ENCODE measurements at regions of chr3 and their contacts with region 1.

Region 1: GRCh38 chr3:124878561-124879336 is 8.4 kb downstream of the ITGB5 start:
- DNase-seq: peak in 1 of 2 donors; percentile 89
- H3K4me3 ChIP-seq: peak overlapping the region in 1 of 2 donors; percentile 31
- H3K27ac ChIP-seq: peak overlapping the region; percentile 91 to 97
- H3K4me1 ChIP-seq: peaks cover 27 to 57% of the 10 kb centered on the region in 2 donors
- H3K27me3 ChIP-seq: no peaks in the 10 kb centered on the region
- CTCF ChIP-seq: no peak

Region 2: DNA sequence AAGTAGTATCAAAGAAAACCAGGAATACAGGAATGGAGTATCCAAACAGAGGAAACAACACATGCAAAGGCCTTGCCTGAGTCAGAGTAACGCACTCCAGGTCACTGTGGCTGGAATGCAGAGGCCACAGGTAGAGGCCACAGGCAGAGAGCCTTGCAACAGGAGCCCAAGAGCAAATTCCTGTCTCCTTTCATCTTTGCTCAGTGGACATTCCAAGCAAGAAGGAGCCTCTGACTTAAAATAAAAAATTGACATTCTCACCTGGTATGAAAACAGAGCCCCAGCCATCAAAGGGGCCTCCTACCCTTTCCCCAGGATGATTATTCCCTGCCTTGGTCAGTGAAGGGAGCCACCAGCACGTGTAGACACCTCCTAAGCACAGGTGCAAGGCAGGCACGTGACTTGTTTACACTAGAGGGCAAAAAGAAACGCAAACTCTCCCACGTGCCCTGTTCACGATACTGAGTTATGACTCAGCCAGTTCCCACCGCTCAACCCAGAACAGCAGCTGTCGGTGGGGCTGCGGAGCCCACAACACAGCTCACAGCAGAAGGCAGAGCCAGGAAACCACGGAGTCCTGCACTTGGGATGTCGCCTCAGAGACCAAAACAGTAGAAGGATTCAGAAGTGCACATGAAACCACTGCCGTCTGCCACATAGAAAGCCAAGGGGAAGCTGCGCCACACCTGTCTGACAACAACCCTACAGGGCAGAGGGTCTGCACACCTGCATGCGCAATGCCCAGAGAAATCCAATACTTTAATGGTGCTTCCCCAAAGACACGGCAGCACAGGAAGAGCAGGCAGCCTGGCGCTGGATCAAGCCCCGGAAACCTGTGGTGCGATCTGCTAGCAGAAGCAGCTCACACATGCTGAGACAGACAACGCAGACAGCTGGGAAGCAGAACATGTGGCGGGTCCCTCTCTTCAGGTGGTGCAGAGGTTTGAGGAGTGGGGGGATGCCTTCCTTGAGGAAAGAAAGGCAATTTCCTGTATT is 43.7 kb before region 1 on chr3:
- intact Hi-C with region 1: loop called (anchors 2 kb)
- DNase-seq: peak; percentile 63 to 81
- H3K4me3 ChIP-seq: no peak overlapping the region
- H3K27ac ChIP-seq: peak overlapping the region; percentile 85 to 89
- H3K4me1 ChIP-seq: peaks cover 21 to 91% of the 10 kb centered on the region in 2 donors
- H3K27me3 ChIP-seq: no peaks in the 10 kb centered on the region
- CTCF ChIP-seq: no peak

Region 3: GRCh38 chr3:124860599-124860998 is 18.1 kb before region 1 on chr3:
- intact Hi-C with region 1: loop called (anchors 1 kb)
- DNase-seq: peak; percentile 30 to 95
- H3K4me3 ChIP-seq: no peak overlapping the region
- H3K27ac ChIP-seq: peak overlapping the region; percentile 71 to 80
- H3K4me1 ChIP-seq: peaks cover 9 to 57% of the 10 kb centered on the region in 2 donors
- H3K27me3 ChIP-seq: no peaks in the 10 kb centered on the region
- CTCF ChIP-seq: no peak

Region 4: GRCh38 chr3:124905849-124906248 is 27.1 kb after region 1 on chr3:
- intact Hi-C with region 1: no loop called
- DNase-seq: no peak
- H3K4me3 ChIP-seq: no peak overlapping the region
- H3K27ac ChIP-seq: no peak overlapping the region
- H3K4me1 ChIP-seq: peaks cover 0 to 5% of the 10 kb centered on the region in 2 donors
- H3K27me3 ChIP-seq: no peaks in the 10 kb centered on the region
- CTCF ChIP-seq: no peak

Region 5: DNA sequence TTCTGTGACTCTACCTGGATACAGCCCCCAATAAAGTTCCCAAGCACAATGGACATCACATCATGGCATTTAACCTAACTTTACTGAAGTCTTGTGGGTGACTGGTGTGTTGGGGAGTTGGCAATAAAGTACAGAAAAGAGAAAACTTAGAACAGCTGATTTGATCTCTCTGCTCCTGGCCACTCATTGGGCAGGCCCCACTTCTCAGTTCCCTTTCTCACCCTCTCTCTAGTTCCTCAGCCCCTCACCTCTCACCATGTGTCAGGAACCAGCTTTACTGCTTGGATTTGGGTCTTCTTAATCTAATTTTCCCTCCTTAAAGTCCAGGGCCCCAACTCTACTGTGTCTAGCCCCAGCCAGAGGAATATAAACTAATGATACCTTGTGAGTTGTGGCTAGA is 56.5 kb after region 1 on chr3:
- intact Hi-C with region 1: no loop called
- DNase-seq: no peak
- H3K4me3 ChIP-seq: no peak overlapping the region
- H3K27ac ChIP-seq: no peak overlapping the region
- H3K4me1 ChIP-seq: no peaks in the 10 kb centered on the region
- H3K27me3 ChIP-seq: no peaks in the 10 kb centered on the region
- CTCF ChIP-seq: no peak